ENCODE measurements at regions of chr1 and their contacts with region 1.

Region 1: DNA sequence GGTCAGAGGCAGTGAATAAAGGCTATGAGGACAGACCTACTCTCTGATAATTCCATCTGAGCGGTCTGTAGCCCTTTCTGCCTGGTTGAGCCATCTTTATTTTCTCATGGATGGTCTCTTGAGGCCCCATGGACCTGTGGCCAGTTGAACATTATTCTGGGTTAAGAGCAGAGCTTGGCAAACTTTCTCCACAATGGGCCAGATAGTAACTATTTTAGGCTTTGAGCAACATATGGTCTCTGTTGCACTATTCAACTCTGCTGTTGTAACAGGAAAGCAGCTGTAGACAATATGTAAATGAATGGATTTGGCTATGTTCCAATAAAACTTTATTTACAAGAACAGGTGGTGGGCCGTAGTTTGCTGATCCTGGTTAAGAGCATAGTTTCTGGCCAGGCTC is 62.7 kb downstream of the KAZN start:
- DNase-seq: no peak
- ATAC-seq: no peak
- H3K4me3 ChIP-seq: no peak overlapping the region
- H3K27ac ChIP-seq: no peak overlapping the region
- H3K4me1 ChIP-seq: no peaks in the 10 kb centered on the region; the same call in 1 of the 2 replicates
- H3K27me3 ChIP-seq: no peaks in the 10 kb centered on the region
- CTCF ChIP-seq: no peak

Region 2: GRCh38 chr1:13756557-13757315 is 904.5 kb before region 1 on chr1:
- CTCF ChIA-PET with region 1: no interaction called
- POLR2A ChIA-PET with region 1: interaction called, 12 read pairs
- in situ Hi-C with region 1: no loop called
- intact Hi-C with region 1: no loop called
- DNase-seq: no peak
- ATAC-seq: no peak
- H3K4me3 ChIP-seq: no peak overlapping the region
- H3K27ac ChIP-seq: no peak overlapping the region
- H3K4me1 ChIP-seq: peaks cover 27% of the 10 kb centered on the region
- H3K27me3 ChIP-seq: no peaks in the 10 kb centered on the region
- CTCF ChIP-seq: no peak

Measured in Panc1 (cell line).